ENCODE measurements at regions of chr1 and their contacts with region 1.

Region 1: DNA sequence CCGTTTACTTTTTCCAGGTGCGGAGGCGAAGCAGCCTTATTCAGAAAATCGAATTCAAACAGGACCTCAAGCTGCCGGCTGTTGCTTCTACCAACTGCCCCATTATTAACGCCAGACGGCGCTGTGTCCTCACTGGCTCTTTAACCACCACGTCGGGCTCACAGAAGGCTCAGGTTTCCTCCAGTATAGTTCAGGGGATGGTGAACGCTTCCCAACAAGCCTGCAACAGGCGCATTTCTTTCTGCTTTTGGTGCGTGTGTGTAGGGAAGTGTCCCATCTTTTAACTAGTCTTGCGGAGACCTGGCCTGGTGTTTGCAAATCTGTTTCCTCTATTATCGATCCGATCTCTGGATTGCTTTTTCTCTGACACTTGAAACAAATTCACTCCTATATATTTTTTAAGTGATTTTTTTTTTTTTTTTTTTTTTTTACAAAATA is 791 bp upstream of the STUM start:
- DNase-seq: peak; percentile 87
- H3K4me3 ChIP-seq: peak overlapping the region in 1 of 2 experiments; percentile 39; a peak in 1 of 4 replicates
- H3K27ac ChIP-seq: no peak overlapping the region
- H3K4me1 ChIP-seq: peaks cover 10 to 24% of the 10 kb centered on the region in 2 experiments; a peak in 1 of 4 replicates
- H3K27me3 ChIP-seq: peaks cover 26% of the 10 kb centered on the region
- CTCF ChIP-seq: peak; percentile 91
- EP300 ChIP-seq: no peak
- RAD21 ChIP-seq: peak; percentile 89

Region 2: GRCh38 chr1:226332947-226333346 is 214.8 kb before region 1 on chr1:
- CTCF ChIA-PET with region 1: no interaction called
- POLR2A ChIA-PET with region 1: no interaction called
- DNase-seq: peak; percentile 35
- H3K4me3 ChIP-seq: peak overlapping the region in 1 of 2 experiments; percentile 29; a peak in 2 of 4 replicates
- H3K27ac ChIP-seq: peak overlapping the region in 1 of 2 experiments; percentile 31; a peak in 1 of 4 replicates
- H3K4me1 ChIP-seq: peaks cover 0 to 2% of the 10 kb centered on the region in 2 experiments; a peak in 2 of 4 replicates
- H3K27me3 ChIP-seq: no peaks in the 10 kb centered on the region
- CTCF ChIP-seq: no peak
- EP300 ChIP-seq: 0 out of 4 replicates have a peak, but pooled peaks of 1 of the 2 experiments have one; percentile 8
- RAD21 ChIP-seq: no peak

Region 3: GRCh38 chr1:226360106-226360746 is 187.5 kb before region 1 on chr1:
- CTCF ChIA-PET with region 1: no interaction called
- POLR2A ChIA-PET with region 1: no interaction called
- DNase-seq: no peak
- H3K4me3 ChIP-seq: no peak overlapping the region
- H3K27ac ChIP-seq: no peak overlapping the region
- H3K4me1 ChIP-seq: peaks cover 0 to 37% of the 10 kb centered on the region in 2 experiments; a peak in 2 of 4 replicates
- H3K27me3 ChIP-seq: no peaks in the 10 kb centered on the region
- CTCF ChIP-seq: no peak
- EP300 ChIP-seq: no peak
- RAD21 ChIP-seq: no peak

Region 4: DNA sequence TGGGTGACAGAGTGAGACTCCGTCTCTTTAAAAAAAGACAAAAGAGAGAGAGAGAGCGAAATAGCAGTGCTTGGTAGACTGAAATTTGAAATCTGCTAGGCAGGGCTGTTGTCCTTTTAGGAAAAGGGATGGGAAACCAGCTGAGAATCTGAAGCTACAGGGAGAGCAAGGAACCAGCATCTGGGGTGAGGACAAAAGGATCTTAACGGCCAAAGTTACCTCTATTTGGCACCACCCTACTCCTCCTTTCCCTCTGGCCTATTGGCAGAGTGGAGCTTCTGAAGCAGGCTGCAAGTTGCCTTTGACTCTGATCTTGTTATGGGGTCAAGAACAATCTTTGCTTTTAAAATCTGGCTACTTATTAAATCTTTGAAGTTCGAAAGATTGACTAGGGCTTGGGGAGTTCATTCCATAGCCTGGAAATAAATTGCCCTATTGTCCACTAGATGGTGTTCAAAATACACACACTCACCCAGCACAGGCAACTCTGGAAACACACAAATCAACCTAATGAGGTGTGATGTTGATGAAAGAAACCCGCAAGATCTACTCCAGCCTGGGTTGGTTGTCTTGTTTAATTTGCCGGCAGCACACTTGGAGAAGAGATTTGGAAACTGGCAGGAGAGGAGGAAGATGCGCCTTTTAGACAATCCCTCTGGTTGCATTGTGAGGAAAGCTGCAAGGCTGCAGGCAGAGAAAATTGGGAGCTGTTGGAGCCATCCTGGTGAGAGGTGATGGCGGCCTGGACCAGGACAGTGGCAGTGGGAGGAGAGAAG is 123.4 kb before region 1 on chr1:
- CTCF ChIA-PET with region 1: interaction called, 52 read pairs
- POLR2A ChIA-PET with region 1: no interaction called
- DNase-seq: peak; percentile 64
- H3K4me3 ChIP-seq: no peak overlapping the region; a peak in 1 of 4 replicates
- H3K27ac ChIP-seq: no peak overlapping the region
- H3K4me1 ChIP-seq: peaks cover 0 to 6% of the 10 kb centered on the region in 2 experiments; a peak in 2 of 4 replicates
- H3K27me3 ChIP-seq: no peaks in the 10 kb centered on the region
- CTCF ChIP-seq: peak; percentile 60
- EP300 ChIP-seq: no peak
- RAD21 ChIP-seq: peak; percentile 80

Region 5: GRCh38 chr1:226526801-226527595 is 20.8 kb before region 1 on chr1:
- CTCF ChIA-PET with region 1: interaction called, 30 read pairs
- POLR2A ChIA-PET with region 1: no interaction called
- DNase-seq: peak; percentile 23
- H3K4me3 ChIP-seq: no peak overlapping the region
- H3K27ac ChIP-seq: no peak overlapping the region
- H3K4me1 ChIP-seq: peaks cover 0 to 3% of the 10 kb centered on the region in 2 experiments; a peak in 1 of 4 replicates
- H3K27me3 ChIP-seq: 0 out of 2 replicates have a peak, but pooled peaks cover 9% of the 10 kb centered on the region
- CTCF ChIP-seq: no peak
- EP300 ChIP-seq: no peak
- RAD21 ChIP-seq: no peak

Region 6: GRCh38 chr1:226569879-226570547 is 22.2 kb after region 1 on chr1:
- CTCF ChIA-PET with region 1: interaction called, 45 read pairs
- POLR2A ChIA-PET with region 1: no interaction called
- DNase-seq: peak; percentile 72
- H3K4me3 ChIP-seq: no peak overlapping the region
- H3K27ac ChIP-seq: no peak overlapping the region
- H3K4me1 ChIP-seq: peaks cover 0 to 2% of the 10 kb centered on the region in 2 experiments; a peak in 1 of 4 replicates
- H3K27me3 ChIP-seq: peaks cover 9% of the 10 kb centered on the region; the same call in 1 of the 2 replicates
- CTCF ChIP-seq: peak; percentile 41; the same call in 1 of the 2 replicates
- EP300 ChIP-seq: no peak
- RAD21 ChIP-seq: no peak

Region 7: DNA sequence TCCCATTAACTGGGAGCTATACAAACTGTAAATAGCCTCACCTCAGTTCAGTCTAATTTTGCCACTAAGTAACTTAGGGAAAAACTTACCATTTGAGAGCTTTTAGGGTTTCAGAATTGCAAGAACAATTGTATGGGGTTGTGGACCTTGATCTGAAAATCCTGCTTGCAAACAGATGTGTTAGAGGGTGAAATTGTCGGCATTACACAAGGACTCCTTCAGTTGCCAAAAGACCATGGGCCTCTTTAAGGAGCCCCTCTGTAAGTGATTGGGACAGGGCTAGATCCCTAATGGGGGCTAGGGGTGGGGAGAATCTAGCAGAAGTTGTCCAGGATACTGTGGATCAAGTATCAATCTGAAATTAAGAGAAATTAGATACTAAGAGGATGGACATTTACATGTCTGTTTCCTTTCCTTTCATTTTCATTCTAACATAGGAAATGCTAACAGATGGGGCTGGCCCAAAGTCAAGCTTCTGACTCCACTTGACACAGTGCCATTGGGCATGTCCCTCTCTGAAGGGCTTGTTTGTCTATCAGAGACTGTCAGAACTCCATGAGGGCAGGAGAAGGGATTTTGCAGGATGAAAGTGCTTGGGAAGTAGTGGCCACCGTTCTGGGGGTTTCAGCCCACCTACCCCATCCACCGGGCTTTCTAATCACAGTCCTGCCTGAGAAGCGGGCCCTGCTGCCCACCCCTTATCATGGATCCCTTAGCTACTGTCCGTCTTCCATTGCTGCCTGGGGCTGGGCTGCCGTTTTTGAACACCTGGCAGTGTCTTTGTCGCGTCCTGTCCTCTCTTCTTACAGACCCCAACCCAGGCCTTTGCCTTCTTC is 55.5 kb after region 1 on chr1:
- CTCF ChIA-PET with region 1: interaction called, 49 read pairs
- POLR2A ChIA-PET with region 1: interaction called, 3 read pairs
- DNase-seq: no peak
- H3K4me3 ChIP-seq: no peak overlapping the region
- H3K27ac ChIP-seq: no peak overlapping the region
- H3K4me1 ChIP-seq: peaks cover 0 to 6% of the 10 kb centered on the region in 2 experiments; a peak in 1 of 4 replicates
- H3K27me3 ChIP-seq: no peaks in the 10 kb centered on the region; the same call in 1 of the 2 replicates
- CTCF ChIP-seq: no peak
- EP300 ChIP-seq: no peak
- RAD21 ChIP-seq: no peak

Region 8: DNA sequence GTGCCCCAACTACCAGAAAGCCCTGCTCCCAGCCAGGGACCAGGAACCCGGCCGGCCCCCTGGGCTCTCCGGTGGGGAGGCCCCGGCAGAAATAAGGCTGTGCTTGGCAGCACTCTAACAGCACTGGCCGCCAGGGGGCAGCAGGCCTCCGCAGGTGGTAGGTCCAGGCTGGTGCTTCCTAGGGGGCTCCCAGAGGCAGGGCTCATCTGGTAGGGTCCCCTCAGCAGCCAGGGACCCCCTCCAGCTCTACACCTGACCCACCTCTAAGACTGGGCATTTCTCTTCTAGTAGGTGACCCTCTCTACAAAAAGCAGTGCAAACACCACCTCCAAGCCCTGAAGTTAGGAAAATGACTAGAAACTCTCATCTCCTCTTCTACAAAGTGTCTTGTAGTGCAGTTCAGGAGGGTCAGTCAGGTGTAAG is 86.4 kb after region 1 on chr1:
- CTCF ChIA-PET with region 1: interaction called, 13 read pairs
- POLR2A ChIA-PET with region 1: no interaction called
- DNase-seq: peak; percentile 91
- H3K4me3 ChIP-seq: peak overlapping the region in 1 of 2 experiments; percentile 33; a peak in 1 of 4 replicates
- H3K27ac ChIP-seq: no peak overlapping the region
- H3K4me1 ChIP-seq: no peaks in the 10 kb centered on the region; a peak in 1 of 4 replicates
- H3K27me3 ChIP-seq: no peaks in the 10 kb centered on the region
- CTCF ChIP-seq: peak; percentile 97
- EP300 ChIP-seq: no peak
- RAD21 ChIP-seq: peak; percentile 94

Region 9: DNA sequence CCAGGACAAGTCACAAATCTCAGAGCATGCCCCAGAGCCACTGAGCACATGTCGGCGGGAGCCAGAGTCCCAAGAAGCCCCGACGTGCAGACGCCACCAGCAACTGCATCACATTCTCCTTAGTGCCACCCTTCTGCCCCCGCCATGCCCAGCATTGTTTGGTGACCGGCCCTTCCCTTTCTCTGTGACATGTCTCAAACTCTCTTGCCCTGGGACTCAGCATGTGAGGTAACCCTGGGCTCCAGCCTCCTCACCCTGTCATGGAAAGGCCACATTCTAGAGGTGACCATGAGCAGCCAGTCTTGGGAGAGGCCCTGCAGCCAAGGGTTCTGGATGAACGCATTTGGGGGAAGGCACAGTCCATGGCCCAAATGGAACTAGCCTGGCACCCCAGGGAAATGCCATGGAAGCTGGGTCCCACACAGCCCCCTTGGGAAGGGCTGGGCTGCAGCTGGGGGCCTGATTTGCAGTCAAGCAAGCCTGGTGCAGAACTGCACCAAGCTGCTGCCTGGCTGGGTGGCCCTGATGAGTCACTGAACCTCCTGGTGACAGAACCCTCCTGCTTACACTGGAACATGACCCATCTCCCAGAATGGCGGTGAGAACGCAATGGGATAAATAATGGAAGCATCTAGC is 96.9 kb after region 1 on chr1:
- CTCF ChIA-PET with region 1: no interaction called
- POLR2A ChIA-PET with region 1: no interaction called
- DNase-seq: no peak
- H3K4me3 ChIP-seq: no peak overlapping the region
- H3K27ac ChIP-seq: no peak overlapping the region
- H3K4me1 ChIP-seq: peaks cover 0 to 5% of the 10 kb centered on the region in 2 experiments; a peak in 1 of 4 replicates
- H3K27me3 ChIP-seq: no peaks in the 10 kb centered on the region
- CTCF ChIP-seq: no peak
- EP300 ChIP-seq: no peak
- RAD21 ChIP-seq: no peak

Measured in SK-N-SH (cell line).